Dorsolateral prefrontal cortex (tissue), 120 donors: ENCODE measurements at regions of chrX and their contacts with region 1.

Region 1: GRCh38 chrX:118807151-118808017 is 16.2 kb upstream of the ZCCHC12 start:
- DNase-seq: peak in 4 of 10 donors; percentile 19 to 59 (median 40)
- H3K4me3 ChIP-seq: no peak overlapping the region
- H3K27ac ChIP-seq: no peak overlapping the region
- H3K27me3 ChIP-seq: peaks cover 0 to 59% (median 16%) of the 10 kb centered on the region in 45 donors
- CTCF ChIP-seq: peak; percentile 25 to 82 (median 68)

Region 2: DNA sequence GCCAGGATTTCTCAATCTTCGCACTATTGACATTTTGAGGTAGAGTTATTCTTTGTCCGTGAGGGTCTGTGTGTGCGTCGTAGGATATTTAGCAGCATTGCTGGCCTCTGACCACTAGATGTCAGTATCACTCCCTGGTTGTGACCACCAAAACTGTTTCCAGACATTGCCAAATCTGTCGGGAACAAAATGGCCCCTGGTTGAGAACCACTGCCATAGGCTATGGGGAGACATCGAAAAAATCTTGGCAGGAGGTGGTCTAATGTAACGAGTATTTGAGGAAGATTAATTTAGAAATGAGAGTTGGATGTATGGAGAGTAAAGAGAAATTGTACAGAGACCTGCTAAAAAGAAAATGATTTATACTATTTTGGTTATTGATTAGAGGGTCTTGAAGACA is 203.4 kb before region 1 on chrX:
- intact Hi-C with region 1: loop called (anchors 5 to 10 kb)
- DNase-seq: peak in 5 of 10 donors; percentile 10 to 46 (median 36)
- H3K4me3 ChIP-seq: peak overlapping the region in 24 of 59 donors; percentile 3 to 42 (median 26)
- H3K27ac ChIP-seq: peak overlapping the region in 4 of 59 donors; percentile 3 to 35 (median 29)
- H3K27me3 ChIP-seq: peaks cover 0 to 44% (median 3%) of the 10 kb centered on the region in 45 donors
- CTCF ChIP-seq: peak; percentile 51 to 91 (median 82)

Region 3: GRCh38 chrX:118644378-118644777 is 163.0 kb before region 1 on chrX:
- intact Hi-C with region 1: loop called in 1 of 2 experiments (anchors 10 kb)
- DNase-seq: no peak
- H3K4me3 ChIP-seq: no peak overlapping the region
- H3K27ac ChIP-seq: no peak overlapping the region
- H3K27me3 ChIP-seq: peaks cover 0 to 32% (median 0%) of the 10 kb centered on the region in 45 donors
- CTCF ChIP-seq: peak in 49 of 56 donors; percentile 15 to 65 (median 40)

Region 4: GRCh38 chrX:118983513-118983912 is 176.1 kb after region 1 on chrX:
- intact Hi-C with region 1: no loop called
- DNase-seq: no peak
- H3K4me3 ChIP-seq: no peak overlapping the region
- H3K27ac ChIP-seq: no peak overlapping the region
- H3K27me3 ChIP-seq: peaks cover 0 to 61% (median 11%) of the 10 kb centered on the region in 45 donors
- CTCF ChIP-seq: no peak